ENCODE measurements at regions of chr3 and their contacts with region 1.

Region 1: GRCh38 chr3:33277193-33277882 is at the start of gene FBXL2:
- DNase-seq: peak in 1 of 2 donors; percentile 78
- H3K4me3 ChIP-seq: peak within 1 kb of the TSS; percentile 87 to 99
- H3K27ac ChIP-seq: peak within 1 kb of the TSS; percentile 66 to 82
- H3K4me1 ChIP-seq: no peaks in the 10 kb centered on the region
- H3K27me3 ChIP-seq: no peaks in the 10 kb centered on the region
- CTCF ChIP-seq: no peak
- total RNA-seq, gene FBXL2: 33.4 TPM

Region 2: GRCh38 chr3:33299395-33300081 is 22.2 kb after region 1 on chr3:
- intact Hi-C with region 1: loop called (anchors 2 kb)
- DNase-seq: no peak
- H3K4me3 ChIP-seq: no peak overlapping the region
- H3K27ac ChIP-seq: peak overlapping the region; percentile 76 to 78
- H3K4me1 ChIP-seq: peaks cover 0 to 8% of the 10 kb centered on the region in 2 donors
- H3K27me3 ChIP-seq: no peaks in the 10 kb centered on the region
- CTCF ChIP-seq: no peak

Region 3: GRCh38 chr3:33831053-33831452 is 553.7 kb after region 1 on chr3:
- intact Hi-C with region 1: no loop called
- DNase-seq: no peak
- H3K4me3 ChIP-seq: no peak overlapping the region
- H3K27ac ChIP-seq: no peak overlapping the region
- H3K4me1 ChIP-seq: no peaks in the 10 kb centered on the region
- H3K27me3 ChIP-seq: no peaks in the 10 kb centered on the region
- CTCF ChIP-seq: no peak

Measured in ascending aorta (tissue), 2 donors.